ENCODE measurements at regions of chr15 and their contacts with region 1.

Region 1: DNA sequence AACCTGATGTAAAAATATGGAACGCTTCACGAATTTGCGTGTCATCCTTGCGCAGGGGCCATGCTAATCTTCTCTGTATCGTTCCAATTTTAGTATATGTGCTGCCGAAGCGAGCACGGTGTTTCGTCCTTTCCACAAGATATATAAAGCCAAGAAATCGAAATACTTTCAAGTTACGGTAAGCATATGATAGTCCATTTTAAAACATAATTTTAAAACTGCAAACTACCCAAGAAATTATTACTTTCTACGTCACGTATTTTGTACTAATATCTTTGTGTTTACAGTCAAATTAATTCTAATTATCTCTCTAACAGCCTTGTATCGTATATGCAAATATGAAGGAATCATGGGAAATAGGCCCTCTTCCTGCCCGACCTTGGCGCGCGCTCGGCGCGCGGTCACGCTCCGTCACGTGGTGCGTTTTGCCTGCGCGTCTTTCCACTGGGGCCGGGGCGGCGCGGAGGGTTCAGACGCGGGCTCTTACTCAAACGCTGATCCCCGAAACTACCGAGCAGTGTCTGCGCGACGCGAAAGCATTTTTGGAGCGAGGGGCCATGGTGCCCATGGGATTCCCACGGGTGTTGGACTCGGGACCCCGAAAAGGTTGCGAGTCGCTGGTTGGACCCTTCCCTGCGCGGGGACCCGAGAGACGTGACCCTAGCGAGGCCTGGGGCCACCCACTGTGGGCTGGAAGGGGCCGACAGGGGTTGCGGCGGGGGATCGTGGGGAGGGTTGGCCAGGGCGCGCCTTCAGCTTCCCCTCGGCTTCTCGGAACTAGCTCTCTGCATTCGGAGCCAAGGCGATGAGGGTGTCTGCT is at the start of gene RNU6-1:
- DNase-seq: peak; percentile 93 to 97 (median 94)
- ATAC-seq: peak; percentile 87 to 95 (median 91)
- H3K4me3 ChIP-seq: peak within 1 kb of the TSS; percentile 56 to 97 (median 88)
- H3K27ac ChIP-seq: peak within 1 kb of the TSS; percentile 85 to 99 (median 95)
- H3K4me1 ChIP-seq: peaks cover 0 to 37% (median 28%) of the 10 kb centered on the region in 12 donors
- H3K27me3 ChIP-seq: peaks cover 0 to 12% (median 9%) of the 10 kb centered on the region in 9 donors
- CTCF ChIP-seq: no peak
- POLR2A ChIP-seq: peak in 1 of 2 donors; percentile 84
- total RNA-seq, gene RNU6-1: not detected

Region 2: DNA sequence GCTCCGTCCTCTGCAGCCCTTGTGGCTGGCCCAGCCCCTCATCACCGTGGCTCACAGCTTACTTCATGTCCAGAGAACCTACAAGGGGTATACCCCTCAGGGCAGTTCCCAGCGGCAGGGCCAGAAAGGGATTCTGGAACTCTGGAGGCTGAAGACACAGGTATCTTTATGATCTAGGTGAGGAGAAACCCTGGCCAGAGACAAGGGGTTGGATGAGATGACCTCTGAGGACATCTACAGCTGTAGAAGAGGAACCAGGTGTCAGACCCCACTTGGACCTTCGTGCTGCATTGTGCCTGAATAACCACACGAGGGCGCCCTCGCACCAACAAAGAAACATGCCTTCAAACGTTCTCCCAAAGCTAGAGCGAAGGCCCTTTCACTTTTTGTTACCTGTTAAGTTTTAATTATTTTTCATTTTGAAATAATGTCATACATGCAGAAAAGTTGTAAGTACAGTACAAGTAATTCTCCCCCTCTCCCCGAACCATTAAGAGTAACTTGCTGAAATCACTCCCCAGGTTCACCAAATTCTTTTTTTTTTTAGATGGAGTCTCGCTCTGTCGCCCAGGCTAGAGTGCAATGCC is 893.5 kb before region 1 on chr15:
- intact Hi-C with region 1: loop called in 9 of 10 experiments (anchors 10 kb)
- DNase-seq: peak; percentile 60 to 79 (median 63)
- ATAC-seq: peak; percentile 53 to 83 (median 74)
- H3K4me3 ChIP-seq: peak overlapping the region in 2 of 12 donors; percentile 13 to 28
- H3K27ac ChIP-seq: no peak overlapping the region
- H3K4me1 ChIP-seq: peaks cover 0 to 12% (median 0%) of the 10 kb centered on the region in 12 donors
- H3K27me3 ChIP-seq: no peaks in the 10 kb centered on the region
- CTCF ChIP-seq: peak; percentile 87 to 97 (median 94)
- POLR2A ChIP-seq: no peak

Region 3: GRCh38 chr15:67456677-67457529 is 383.2 kb before region 1 on chr15:
- intact Hi-C with region 1: loop called in 9 of 10 experiments (anchors 1 to 2 kb)
- DNase-seq: peak; percentile 80 to 87 (median 81)
- ATAC-seq: peak in 3 of 4 donors; percentile 79 to 87 (median 86)
- H3K4me3 ChIP-seq: no peak overlapping the region
- H3K27ac ChIP-seq: no peak overlapping the region
- H3K4me1 ChIP-seq: peaks cover 0 to 5% (median 0%) of the 10 kb centered on the region in 12 donors
- H3K27me3 ChIP-seq: no peaks in the 10 kb centered on the region
- CTCF ChIP-seq: peak; percentile 80 to 90 (median 88)
- POLR2A ChIP-seq: no peak

Region 4: GRCh38 chr15:67510597-67511225 is 329.4 kb before region 1 on chr15:
- intact Hi-C with region 1: loop called in 1 of 10 experiments (anchors 10 kb)
- DNase-seq: no peak
- ATAC-seq: no peak
- H3K4me3 ChIP-seq: no peak overlapping the region
- H3K27ac ChIP-seq: no peak overlapping the region
- H3K4me1 ChIP-seq: peaks cover 0 to 6% (median 0%) of the 10 kb centered on the region in 12 donors
- H3K27me3 ChIP-seq: no peaks in the 10 kb centered on the region
- CTCF ChIP-seq: no peak
- POLR2A ChIP-seq: no peak

Region 5: DNA sequence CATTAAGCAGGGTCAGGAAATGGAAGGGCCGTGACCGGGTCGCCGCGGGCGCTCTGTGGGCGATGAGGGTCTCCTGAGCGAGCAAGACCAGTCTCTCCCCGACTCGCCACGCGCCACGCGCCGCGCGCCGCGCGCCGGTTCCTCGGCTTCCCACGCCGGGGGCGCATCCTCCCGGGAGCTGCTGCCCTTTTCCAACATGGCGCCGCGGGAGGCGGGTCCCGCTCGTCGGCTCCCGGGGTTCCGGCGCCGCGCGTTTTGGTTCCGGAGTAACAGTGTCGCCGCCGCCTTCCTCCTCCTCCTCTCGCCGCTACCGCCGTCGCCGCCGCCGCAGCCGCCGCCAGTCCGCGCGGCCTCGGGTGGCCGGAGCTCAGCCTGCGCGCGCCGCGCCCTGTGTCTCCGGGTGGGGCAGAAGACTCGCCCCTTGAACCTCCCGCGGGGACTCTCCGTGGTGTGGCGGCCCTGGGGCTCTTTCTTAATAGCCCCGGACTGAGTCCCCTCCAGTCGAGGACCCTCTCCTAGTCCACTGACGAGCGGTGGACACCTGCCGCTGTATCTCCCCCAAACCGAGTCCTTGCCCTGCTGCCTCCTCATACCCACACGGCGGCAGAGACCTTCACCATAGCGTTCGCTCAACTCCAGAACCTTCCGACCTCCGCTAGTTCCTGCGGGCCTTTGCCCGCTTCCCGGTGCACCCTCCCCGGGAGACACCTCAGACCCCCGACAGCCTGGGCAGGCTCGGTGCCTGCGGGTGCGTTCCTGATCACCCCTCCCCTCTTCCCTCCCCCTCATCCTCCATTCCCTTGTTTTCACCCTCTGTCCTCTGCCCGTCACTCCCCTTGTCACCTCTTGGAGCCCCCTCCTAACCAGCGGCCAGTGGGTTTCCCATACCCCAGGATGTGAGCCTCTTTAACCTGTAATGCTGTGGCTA is 297.5 kb before region 1 on chr15 and contains the start of gene MAP2K5:
- intact Hi-C with region 1: loop called in 3 of 10 experiments (anchors 5 to 10 kb)
- DNase-seq: peak; percentile 90 to 95 (median 92)
- ATAC-seq: peak; percentile 79 to 97 (median 95)
- H3K4me3 ChIP-seq: peak within 1 kb of the TSS; percentile 45 to 98 (median 88)
- H3K27ac ChIP-seq: peak within 1 kb of the TSS; percentile 63 to 95 (median 88)
- H3K4me1 ChIP-seq: peaks cover 0 to 32% (median 16%) of the 10 kb centered on the region in 12 donors
- H3K27me3 ChIP-seq: no peaks in the 10 kb centered on the region
- CTCF ChIP-seq: no peak
- POLR2A ChIP-seq: peak; percentile 17 to 79
- total RNA-seq, gene MAP2K5: 9.9 to 32.0 (median 22.7) TPM

Measured in heart left ventricle (tissue), 16 donors.